K562 (cell line): ENCODE measurements at regions of chr20 and their contacts with region 1.

Region 1: GRCh38 chr20:44310664-44311639 is at the start of gene FITM2:
- DNase-seq: peak; percentile 97 to 99 (median 98)
- ATAC-seq: peak; percentile 96
- H3K4me3 ChIP-seq: peak within 1 kb of the TSS; percentile 63
- H3K27ac ChIP-seq: peak within 1 kb of the TSS; percentile 20; the same call in 1 of the 3 replicates
- H3K4me1 ChIP-seq: peaks cover 12 to 15% of the 10 kb centered on the region in 2 experiments
- H3K27me3 ChIP-seq: no peaks in the 10 kb centered on the region
- CTCF ChIP-seq: peak; percentile 92 to 96 (median 95)
- EP300 ChIP-seq: no peak
- POLR2A ChIP-seq: peak; percentile 53; the same call in 1 of the 2 replicates
- RAD21 ChIP-seq: peak; percentile 89
- polyA plus RNA-seq, gene FITM2: 0.64 to 0.87 TPM

Region 2: GRCh38 chr20:44475694-44476560 is 165.0 kb after region 1 on chr20 and contains the start of gene TTPAL:
- CTCF ChIA-PET with region 1: no interaction called
- POLR2A ChIA-PET with region 1: no interaction called
- in situ Hi-C with region 1: no loop called
- intact Hi-C with region 1: loop called (anchors 5 kb)
- DNase-seq: peak; percentile 94 to 98 (median 96)
- ATAC-seq: peak; percentile 98
- H3K4me3 ChIP-seq: peak within 1 kb of the TSS; percentile 68
- H3K27ac ChIP-seq: peak within 1 kb of the TSS; percentile 77
- H3K4me1 ChIP-seq: peaks cover 17 to 22% of the 10 kb centered on the region in 2 experiments; a peak in 4 of 5 replicates
- H3K27me3 ChIP-seq: no peaks in the 10 kb centered on the region; a peak in 1 of 5 replicates
- CTCF ChIP-seq: peak; percentile 21 to 57 (median 37); a peak in 4 of 6 replicates
- EP300 ChIP-seq: no peak
- POLR2A ChIP-seq: peak; percentile 97
- RAD21 ChIP-seq: peak; percentile 46 to 50
- polyA plus RNA-seq, gene TTPAL: 1.1 to 1.5 TPM